ENCODE measurements at regions of chr19 and their contacts with region 1.

Region 1: GRCh38 chr19:57010541-57010940 is 109.2 kb upstream of the USP29 start:
- DNase-seq: no peak
- H3K4me3 ChIP-seq: no peak overlapping the region
- H3K27ac ChIP-seq: no peak overlapping the region
- H3K4me1 ChIP-seq: peaks cover 5% of the 10 kb centered on the region
- H3K27me3 ChIP-seq: no peaks in the 10 kb centered on the region
- CTCF ChIP-seq: no peak
- EP300 ChIP-seq: no peak
- POLR2A ChIP-seq: no peak

Region 2: DNA sequence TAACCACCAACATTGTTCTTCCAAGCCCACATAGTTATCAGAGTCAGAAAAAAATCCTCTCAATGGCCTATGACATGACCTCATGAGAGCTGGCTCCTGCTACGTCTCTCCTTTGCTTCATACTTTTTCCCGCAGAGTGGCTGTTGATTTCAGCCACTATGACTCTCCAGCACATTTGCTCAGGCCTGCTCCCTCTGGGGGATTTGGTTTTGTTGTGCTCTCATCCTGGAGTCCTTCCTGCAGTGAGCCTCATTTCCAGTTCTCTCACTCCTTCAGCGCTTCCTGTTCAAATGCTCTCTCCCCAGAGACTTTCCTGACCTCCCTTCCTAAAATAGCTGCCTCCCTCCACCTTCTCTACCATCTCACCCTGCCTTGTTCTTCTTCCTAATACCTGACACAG is 37.2 kb after region 1 on chr19:
- intact Hi-C with region 1: loop called in 1 of 4 experiments (anchors 5 kb)
- DNase-seq: no peak
- H3K4me3 ChIP-seq: no peak overlapping the region
- H3K27ac ChIP-seq: no peak overlapping the region
- H3K4me1 ChIP-seq: no peaks in the 10 kb centered on the region
- H3K27me3 ChIP-seq: no peaks in the 10 kb centered on the region
- CTCF ChIP-seq: no peak
- EP300 ChIP-seq: no peak
- POLR2A ChIP-seq: no peak

Region 3: DNA sequence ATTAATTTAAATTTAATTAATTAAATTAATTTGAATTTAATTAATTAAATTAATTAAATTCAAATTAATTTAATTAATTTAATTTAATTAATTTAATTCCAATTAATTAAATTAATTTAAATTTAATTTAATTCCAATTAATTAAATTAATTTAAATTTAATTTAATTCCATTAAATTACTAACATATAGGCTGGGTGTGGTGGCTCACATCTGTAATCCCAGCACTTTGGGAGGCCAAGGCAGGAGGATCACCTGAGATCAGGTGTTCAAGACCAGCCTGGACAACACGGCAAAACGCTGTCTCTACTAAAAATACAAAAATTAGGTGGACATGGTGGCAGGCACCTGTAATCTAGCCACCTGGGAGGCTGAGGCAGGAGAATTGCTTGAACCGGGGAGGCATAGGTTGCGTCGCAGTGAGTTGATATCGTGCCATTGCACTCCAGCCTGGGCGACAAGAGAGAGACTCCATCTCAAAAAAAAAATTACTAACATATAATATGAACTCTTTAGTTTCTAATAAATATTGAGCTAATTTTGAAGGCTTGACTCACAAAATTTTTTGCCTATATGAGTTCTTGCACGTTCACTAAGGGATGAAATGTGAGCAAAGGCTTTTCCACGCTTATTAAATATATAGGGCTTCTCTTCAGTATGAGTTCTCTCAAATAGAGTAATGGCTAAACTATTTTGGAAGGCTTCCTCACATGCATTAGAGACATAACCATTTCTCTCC is 100.2 kb after region 1 on chr19:
- intact Hi-C with region 1: no loop called
- DNase-seq: no peak
- H3K4me3 ChIP-seq: no peak overlapping the region
- H3K27ac ChIP-seq: no peak overlapping the region
- H3K4me1 ChIP-seq: no peaks in the 10 kb centered on the region
- H3K27me3 ChIP-seq: no peaks in the 10 kb centered on the region
- CTCF ChIP-seq: no peak
- EP300 ChIP-seq: no peak
- POLR2A ChIP-seq: no peak

Region 4: DNA sequence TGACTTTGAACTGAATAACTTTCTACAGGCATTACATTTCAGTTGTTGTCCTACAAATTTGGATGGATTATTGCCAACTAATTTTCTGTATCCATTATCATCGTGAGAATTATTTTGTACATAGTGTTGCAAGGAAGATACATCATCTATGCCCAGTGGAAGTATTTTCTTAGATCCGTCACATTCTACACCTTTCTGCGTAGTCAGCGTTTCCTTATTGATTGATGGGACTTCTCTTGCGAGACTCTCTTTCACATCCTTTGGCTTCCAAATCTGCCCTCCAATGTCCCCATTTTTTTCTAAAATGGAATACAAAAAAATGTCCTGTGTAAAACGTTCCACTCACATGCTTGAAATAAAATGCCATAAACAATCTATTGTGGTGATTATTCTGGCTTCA is 125.3 kb after region 1 on chr19:
- intact Hi-C with region 1: no loop called
- DNase-seq: no peak
- H3K4me3 ChIP-seq: no peak overlapping the region
- H3K27ac ChIP-seq: no peak overlapping the region
- H3K4me1 ChIP-seq: no peaks in the 10 kb centered on the region
- H3K27me3 ChIP-seq: no peaks in the 10 kb centered on the region
- CTCF ChIP-seq: no peak
- EP300 ChIP-seq: no peak
- POLR2A ChIP-seq: no peak

Measured in ovary (tissue), 10 donors.